BJ (cell line): ENCODE measurements at regions of chr22 and their contacts with region 1.

Region 1: GRCh38 chr22:20885557-20886323 is 26.9 kb downstream of the SNAP29 start:
- DNase-seq: peak; percentile 12
- H3K4me3 ChIP-seq: no peak overlapping the region
- H3K27me3 ChIP-seq: no peaks in the 10 kb centered on the region
- CTCF ChIP-seq: peak; percentile 98

Region 2: GRCh38 chr22:20319745-20320658 is 565.7 kb before region 1 on chr22 and contains the start of gene DGCR6L:
- CTCF ChIA-PET with region 1: no interaction called
- POLR2A ChIA-PET with region 1: no interaction called
- DNase-seq: no peak
- H3K4me3 ChIP-seq: peak within 1 kb of the TSS; percentile 94
- H3K27me3 ChIP-seq: no peaks in the 10 kb centered on the region
- CTCF ChIP-seq: no peak
- polyA plus RNA-seq, gene DGCR6L: 38.9 and 65.8 TPM in 2 replicates

Region 3: GRCh38 chr22:20777420-20778177 is 108.1 kb before region 1 on chr22:
- CTCF ChIA-PET with region 1: no interaction called
- POLR2A ChIA-PET with region 1: no interaction called
- DNase-seq: peak; percentile 71
- H3K4me3 ChIP-seq: no peak overlapping the region
- H3K27me3 ChIP-seq: no peaks in the 10 kb centered on the region
- CTCF ChIP-seq: peak; percentile 13; the same call in 1 of the 2 replicates

Region 4: DNA sequence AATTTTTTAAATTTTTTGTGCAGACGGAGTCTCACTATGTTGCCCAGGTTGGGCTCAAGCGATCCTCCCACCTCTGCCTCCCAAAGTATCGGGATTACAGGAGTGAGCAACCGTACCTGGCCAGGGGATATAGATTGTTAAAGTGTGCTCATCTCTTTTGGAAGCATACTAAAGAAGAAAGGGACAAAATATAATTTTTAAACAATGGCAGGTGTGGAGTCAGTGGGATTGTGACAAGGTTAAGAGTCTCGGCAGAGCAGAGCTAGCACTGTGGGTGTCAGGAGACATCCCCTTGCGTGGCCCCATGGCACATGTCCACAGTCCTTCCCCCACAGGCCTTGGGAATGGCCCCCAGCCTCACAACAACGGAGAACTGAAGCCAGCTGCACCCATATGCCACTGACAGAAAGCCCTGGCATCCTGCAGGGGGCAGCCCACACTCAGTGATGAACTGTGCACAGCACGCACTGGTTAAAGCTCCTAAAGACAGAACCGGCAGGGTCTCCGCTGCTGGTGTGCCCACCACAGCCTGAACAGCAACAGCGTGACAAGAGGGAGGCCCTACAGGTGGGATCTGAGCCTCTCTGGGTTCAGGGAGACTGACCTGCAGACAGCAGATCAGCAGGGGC is 81.9 kb before region 1 on chr22:
- CTCF ChIA-PET with region 1: interaction called, 21 read pairs
- POLR2A ChIA-PET with region 1: no interaction called
- DNase-seq: no peak
- H3K4me3 ChIP-seq: no peak overlapping the region
- H3K27me3 ChIP-seq: no peaks in the 10 kb centered on the region
- CTCF ChIP-seq: peak; percentile 73

Region 5: GRCh38 chr22:20873214-20873613 is 12.5 kb before region 1 on chr22:
- CTCF ChIA-PET with region 1: interaction called, 21 read pairs
- POLR2A ChIA-PET with region 1: interaction called, 8 read pairs
- DNase-seq: no peak
- H3K4me3 ChIP-seq: no peak overlapping the region
- H3K27me3 ChIP-seq: no peaks in the 10 kb centered on the region
- CTCF ChIP-seq: no peak

Region 6: GRCh38 chr22:20916983-20917810 is 31.5 kb after region 1 on chr22 and contains the start of gene CRKL:
- CTCF ChIA-PET with region 1: interaction called, 14 read pairs
- POLR2A ChIA-PET with region 1: no interaction called
- DNase-seq: peak; percentile 80
- H3K4me3 ChIP-seq: peak within 1 kb of the TSS; percentile 97
- H3K27me3 ChIP-seq: no peaks in the 10 kb centered on the region
- CTCF ChIP-seq: peak; percentile 91
- polyA plus RNA-seq, gene CRKL: 14.7 and 21.4 TPM in 2 replicates